Ovary (tissue), 10 donors: ENCODE measurements at regions of chr6 and their contacts with region 1.

Region 1: GRCh38 chr6:170174124-170174770 is 116.6 kb downstream of the DLL1 start:
- DNase-seq: peak in 4 of 5 donors; percentile 34 to 63 (median 53)
- H3K4me3 ChIP-seq: no peak overlapping the region
- H3K27ac ChIP-seq: no peak overlapping the region
- H3K4me1 ChIP-seq: peaks cover 7% of the 10 kb centered on the region
- H3K27me3 ChIP-seq: no peaks in the 10 kb centered on the region
- CTCF ChIP-seq: no peak
- EP300 ChIP-seq: no peak
- POLR2A ChIP-seq: no peak

Region 2: DNA sequence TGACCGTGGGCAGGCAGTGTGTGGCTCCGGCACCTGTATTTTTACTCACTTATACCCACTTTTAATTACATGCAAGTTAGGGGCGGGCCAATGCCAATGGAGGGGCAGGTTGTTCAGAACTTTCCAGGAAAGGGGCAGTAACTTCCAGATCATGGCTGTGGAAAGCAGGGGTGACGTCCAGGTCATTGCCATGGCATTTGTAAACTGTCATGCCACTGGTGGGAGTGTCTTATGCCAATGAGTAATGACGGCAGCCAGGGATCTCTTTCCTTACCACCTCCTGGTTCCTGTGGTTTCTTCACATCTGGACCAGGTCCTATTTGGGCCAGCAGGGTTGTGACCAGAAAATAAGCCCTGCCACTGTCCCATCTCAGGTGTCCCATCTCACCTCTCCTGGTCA is 1179.3 kb before region 1 on chr6:
- intact Hi-C with region 1: loop called in 1 of 4 experiments (anchors 5 kb)
- DNase-seq: no peak
- H3K4me3 ChIP-seq: no peak overlapping the region
- H3K27ac ChIP-seq: no peak overlapping the region
- H3K4me1 ChIP-seq: no peaks in the 10 kb centered on the region
- H3K27me3 ChIP-seq: no peaks in the 10 kb centered on the region
- CTCF ChIP-seq: no peak
- EP300 ChIP-seq: no peak
- POLR2A ChIP-seq: no peak

Region 3: DNA sequence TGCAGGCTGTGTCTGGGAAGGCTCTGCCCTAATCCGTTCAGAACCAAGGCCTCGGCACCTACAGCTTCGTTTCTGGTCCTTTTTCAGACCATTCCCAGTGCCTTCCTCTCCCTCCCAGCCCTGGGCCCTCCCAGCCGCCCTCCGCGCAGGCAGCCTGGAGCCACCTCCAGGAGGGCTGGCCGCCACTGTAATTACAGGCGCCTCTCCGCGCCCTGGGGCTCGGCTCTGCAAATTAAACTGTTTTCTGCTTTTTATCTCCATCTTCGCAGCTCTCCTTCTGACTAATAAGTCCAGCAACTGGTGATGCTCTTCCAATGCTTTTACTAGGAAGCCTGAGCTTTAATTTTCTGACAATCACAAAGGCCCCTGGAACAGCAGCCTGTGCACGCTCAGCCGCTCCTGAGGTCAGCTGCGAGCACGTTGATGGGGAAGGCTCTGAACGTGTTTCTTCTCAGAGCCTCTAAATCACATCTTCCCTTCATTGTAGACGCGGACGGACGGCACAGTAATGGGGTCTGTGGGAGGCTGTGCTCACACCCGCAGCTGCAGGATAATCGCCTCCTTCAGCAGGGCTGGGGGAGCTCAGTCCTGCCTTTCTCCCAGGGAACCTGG is 78.0 kb before region 1 on chr6:
- intact Hi-C with region 1: no loop called
- DNase-seq: peak in 2 of 5 donors; percentile 2 to 3
- H3K4me3 ChIP-seq: no peak overlapping the region
- H3K27ac ChIP-seq: no peak overlapping the region
- H3K4me1 ChIP-seq: no peaks in the 10 kb centered on the region
- H3K27me3 ChIP-seq: no peaks in the 10 kb centered on the region
- CTCF ChIP-seq: no peak
- EP300 ChIP-seq: no peak
- POLR2A ChIP-seq: no peak

Region 4: GRCh38 chr6:170200458-170200891 is 26.2 kb after region 1 on chr6:
- intact Hi-C with region 1: no loop called
- DNase-seq: no peak
- H3K4me3 ChIP-seq: no peak overlapping the region
- H3K27ac ChIP-seq: no peak overlapping the region
- H3K4me1 ChIP-seq: no peaks in the 10 kb centered on the region
- H3K27me3 ChIP-seq: no peaks in the 10 kb centered on the region
- CTCF ChIP-seq: no peak
- EP300 ChIP-seq: no peak
- POLR2A ChIP-seq: no peak